Heart right ventricle (tissue), 16 donors: ENCODE measurements at regions of chr6 and their contacts with region 1.

Region 1: DNA sequence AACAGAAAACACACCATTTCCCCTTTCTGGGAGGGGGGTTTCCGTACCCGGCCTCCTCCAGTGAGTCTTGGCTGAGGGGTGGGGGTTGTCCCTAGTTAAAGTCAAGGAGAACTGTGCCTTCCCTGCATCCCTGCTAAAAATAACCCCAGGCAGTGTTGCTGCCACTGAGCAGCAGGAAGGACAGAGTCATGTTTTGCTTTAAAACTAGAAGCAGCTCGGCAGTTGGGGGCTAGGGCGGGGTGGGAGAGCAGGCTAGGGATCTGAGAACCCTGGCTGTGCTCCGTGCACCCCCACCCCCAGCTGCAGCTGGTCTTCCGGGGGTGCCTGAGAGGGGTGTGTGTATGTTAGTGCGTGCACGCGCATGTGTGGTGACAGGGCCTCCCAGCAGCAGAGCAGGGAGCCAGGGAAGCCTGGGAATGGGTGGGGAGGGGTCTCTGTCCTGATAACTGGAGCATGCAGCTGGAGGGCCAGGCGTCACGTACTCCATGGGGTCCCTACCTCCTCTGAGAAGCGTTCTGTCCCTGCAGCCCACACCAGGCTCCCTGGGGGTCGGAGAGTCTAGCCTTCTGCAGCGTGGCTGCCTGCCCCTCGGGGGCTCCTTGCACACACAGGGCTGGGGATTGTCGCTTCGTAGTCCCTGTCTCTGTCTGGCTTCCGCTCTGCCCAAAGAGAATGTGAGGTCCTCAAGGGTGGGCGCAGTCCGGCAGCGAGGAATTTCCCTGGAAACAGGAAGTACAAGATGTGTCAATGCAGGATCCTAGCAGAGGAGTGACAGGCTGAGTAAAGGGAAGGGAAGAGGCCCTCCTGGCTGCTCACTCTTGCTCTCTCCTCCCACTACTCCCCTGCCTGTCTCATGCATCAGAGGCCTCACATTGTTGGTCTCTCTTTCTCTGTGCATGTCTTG is 16.8 kb upstream of the ARMC12 start:
- DNase-seq: peak; percentile 45 to 52
- ATAC-seq: peak; percentile 39 to 82 (median 76)
- H3K4me3 ChIP-seq: peak overlapping the region in 9 of 10 donors; percentile 23 to 42 (median 37)
- H3K27ac ChIP-seq: peak overlapping the region; percentile 65 to 93 (median 88)
- H3K4me1 ChIP-seq: peaks cover 21 to 76% (median 42%) of the 10 kb centered on the region in 9 donors
- H3K27me3 ChIP-seq: no peaks in the 10 kb centered on the region
- CTCF ChIP-seq: no peak

Region 2: GRCh38 chr6:34994693-34995092 is 725.4 kb before region 1 on chr6:
- intact Hi-C with region 1: loop called in 1 of 10 experiments (anchors 5 kb)
- DNase-seq: no peak
- ATAC-seq: no peak
- H3K4me3 ChIP-seq: no peak overlapping the region
- H3K27ac ChIP-seq: no peak overlapping the region
- H3K4me1 ChIP-seq: no peaks in the 10 kb centered on the region
- H3K27me3 ChIP-seq: no peaks in the 10 kb centered on the region
- CTCF ChIP-seq: no peak

Region 3: DNA sequence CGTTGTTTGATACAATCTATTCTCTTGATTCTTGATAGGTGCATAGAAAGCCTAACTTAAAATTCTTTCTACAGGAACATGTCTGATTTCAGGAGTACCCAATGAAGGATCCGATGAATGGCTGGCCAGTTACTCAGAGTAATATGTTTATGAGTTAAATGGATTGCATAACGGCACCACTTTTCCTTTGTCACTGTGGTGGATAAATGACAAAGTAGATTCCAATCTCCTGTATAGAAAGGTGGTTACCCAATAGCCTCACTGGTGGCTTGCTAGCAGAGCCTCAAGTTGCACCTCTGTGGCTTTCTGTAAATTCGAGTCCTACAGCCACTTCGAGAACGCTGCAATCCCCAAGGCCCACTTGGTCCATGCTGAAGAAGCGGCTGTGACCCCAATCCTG is 113.5 kb after region 1 on chr6:
- intact Hi-C with region 1: no loop called
- DNase-seq: no peak
- ATAC-seq: no peak
- H3K4me3 ChIP-seq: no peak overlapping the region
- H3K27ac ChIP-seq: no peak overlapping the region
- H3K4me1 ChIP-seq: no peaks in the 10 kb centered on the region
- H3K27me3 ChIP-seq: no peaks in the 10 kb centered on the region
- CTCF ChIP-seq: no peak